A673 (cell line): ENCODE measurements at regions of chr5 and their contacts with region 1.

Region 1: GRCh38 chr5:140664359-140665119 is at the start of gene WDR55:
- DNase-seq: peak; percentile 98
- H3K4me3 ChIP-seq: peak within 1 kb of the TSS; percentile 86
- H3K27ac ChIP-seq: peak within 1 kb of the TSS; percentile 80
- H3K4me1 ChIP-seq: peaks cover 6% of the 10 kb centered on the region
- H3K27me3 ChIP-seq: no peaks in the 10 kb centered on the region
- CTCF ChIP-seq: no peak
- total RNA-seq, gene WDR55: 31.1 and 33.2 TPM in 2 replicates

Region 2: DNA sequence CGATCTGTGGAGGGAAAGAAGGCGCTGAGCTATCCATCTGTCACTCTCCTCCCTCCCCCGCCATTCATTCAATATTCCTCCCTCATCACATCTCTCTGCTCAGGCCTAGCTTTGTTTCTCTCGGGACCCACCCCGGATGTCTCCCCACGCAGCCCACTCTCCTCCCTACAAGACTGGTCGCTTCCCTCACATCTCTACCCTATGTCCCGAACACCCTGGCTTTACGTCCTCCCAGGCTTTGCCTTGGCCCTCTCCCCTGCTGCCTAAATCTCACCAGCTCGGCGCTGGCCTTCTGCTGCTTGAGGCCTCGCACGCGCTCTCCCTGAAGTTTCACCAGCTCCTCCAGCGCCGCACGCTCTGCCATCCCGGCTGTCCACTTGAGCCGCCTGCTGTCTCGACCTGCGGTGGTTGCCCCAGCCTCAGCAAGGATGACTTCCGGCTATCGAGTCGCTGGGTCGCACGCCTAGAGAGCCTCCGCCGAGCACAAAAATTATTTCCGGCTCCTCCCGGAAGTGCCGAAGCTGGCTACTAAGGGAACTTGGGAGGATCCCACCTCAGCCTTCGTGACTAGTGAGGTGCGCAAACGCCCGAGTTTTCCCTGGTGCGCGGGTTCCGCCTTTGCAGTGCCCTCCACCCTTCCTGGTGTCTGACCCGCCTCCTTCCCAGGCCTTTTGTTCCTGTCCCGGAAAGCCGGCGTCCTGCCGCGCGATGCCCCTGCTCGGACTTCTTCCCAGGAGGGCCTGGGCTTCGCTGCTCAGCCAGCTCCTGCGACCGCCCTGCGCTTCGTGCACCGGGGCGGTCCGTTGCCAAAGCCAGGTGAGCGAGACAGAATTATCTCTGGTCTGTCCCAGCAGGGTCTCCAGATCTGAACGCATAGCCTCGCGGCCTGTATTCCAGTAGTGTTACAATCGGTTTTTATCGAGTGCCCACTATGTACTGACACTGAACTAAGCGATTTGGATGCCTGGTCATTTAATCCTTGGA is 26.7 kb after region 1 on chr5 and contains the starts of genes HARS1 and HARS2:
- CTCF ChIA-PET with region 1: no interaction called
- POLR2A ChIA-PET with region 1: no interaction called
- intact Hi-C with region 1: loop called (anchors 1 kb)
- DNase-seq: peak; percentile 95
- H3K4me3 ChIP-seq: peak within 1 kb of the TSS; percentile 84
- H3K27ac ChIP-seq: peak within 1 kb of the TSS; percentile 83
- H3K4me1 ChIP-seq: peaks cover 9% of the 10 kb centered on the region
- H3K27me3 ChIP-seq: no peaks in the 10 kb centered on the region
- CTCF ChIP-seq: no peak
- total RNA-seq, gene HARS1: 95.6 and 101 TPM in 2 replicates
- total RNA-seq, gene HARS2: 33.0 and 33.7 TPM in 2 replicates